Activated CD8-positive, alpha-beta T cell treated with anti-CD3 and anti-CD28 coated beads, Interleukin-2, amount 10 ng/mL, durations not matched to agents 7 days and 5 days (primary cell): ENCODE measurements at regions of chr5 and their contacts with region 1.

Region 1: DNA sequence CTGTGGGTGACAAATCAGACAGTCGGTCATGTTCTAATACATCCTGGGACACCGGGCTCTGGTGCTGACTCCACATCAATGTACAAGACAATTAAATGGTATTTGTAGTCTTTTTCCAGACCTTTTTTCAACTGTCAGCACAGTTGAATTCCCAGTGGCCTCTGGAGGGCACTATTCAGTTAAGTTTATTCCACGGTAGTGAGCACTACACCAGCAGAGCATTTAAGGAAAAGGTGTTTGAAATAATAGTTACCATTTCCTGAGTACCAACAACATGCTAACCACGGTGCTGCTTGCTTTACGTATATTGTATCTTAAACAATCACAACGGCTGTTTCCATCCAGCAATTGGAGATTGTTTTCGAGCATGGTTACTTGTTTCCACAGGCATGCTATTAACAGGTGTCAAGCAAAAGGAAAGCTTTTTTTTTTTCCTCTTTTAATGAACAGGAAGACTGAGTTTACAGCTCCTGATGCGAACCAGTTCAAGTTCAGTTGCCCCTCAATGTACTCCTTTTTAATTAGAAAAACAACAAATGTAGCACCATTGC is 186.7 kb downstream of the PDZD2 start:
- DNase-seq: peak; percentile 57
- ATAC-seq: peak; percentile 72
- H3K4me3 Mint-ChIP-seq: no peak overlapping the region
- H3K27ac Mint-ChIP-seq: no peak overlapping the region
- H3K4me1 Mint-ChIP-seq: no peaks in the 10 kb centered on the region
- H3K27me3 Mint-ChIP-seq: peaks cover 4% of the 10 kb centered on the region

Region 2: GRCh38 chr5:31901807-31902530 is 76.4 kb after region 1 on chr5:
- CTCF ChIA-PET with region 1: no interaction called
- POLR2A ChIA-PET with region 1: no interaction called
- DNase-seq: no peak
- ATAC-seq: no peak
- H3K4me3 Mint-ChIP-seq: no peak overlapping the region
- H3K27ac Mint-ChIP-seq: no peak overlapping the region
- H3K4me1 Mint-ChIP-seq: peaks cover 2% of the 10 kb centered on the region
- H3K27me3 Mint-ChIP-seq: no peaks in the 10 kb centered on the region

Region 3: GRCh38 chr5:32076699-32077695 is 251.4 kb after region 1 on chr5:
- CTCF ChIA-PET with region 1: interaction called, 26 read pairs
- POLR2A ChIA-PET with region 1: no interaction called
- DNase-seq: peak; percentile 53
- ATAC-seq: no peak
- H3K4me3 Mint-ChIP-seq: no peak overlapping the region
- H3K27ac Mint-ChIP-seq: no peak overlapping the region
- H3K4me1 Mint-ChIP-seq: no peaks in the 10 kb centered on the region
- H3K27me3 Mint-ChIP-seq: no peaks in the 10 kb centered on the region